Activated CD4-positive, alpha-beta T cell treated with anti-CD3 and anti-CD28 coated beads, Interleukin-2, amount 10 ng/mL, durations not matched to agents 24 days and 14 days (primary cell): ENCODE measurements at regions of chr20 and their contacts with region 1.

Region 1: DNA sequence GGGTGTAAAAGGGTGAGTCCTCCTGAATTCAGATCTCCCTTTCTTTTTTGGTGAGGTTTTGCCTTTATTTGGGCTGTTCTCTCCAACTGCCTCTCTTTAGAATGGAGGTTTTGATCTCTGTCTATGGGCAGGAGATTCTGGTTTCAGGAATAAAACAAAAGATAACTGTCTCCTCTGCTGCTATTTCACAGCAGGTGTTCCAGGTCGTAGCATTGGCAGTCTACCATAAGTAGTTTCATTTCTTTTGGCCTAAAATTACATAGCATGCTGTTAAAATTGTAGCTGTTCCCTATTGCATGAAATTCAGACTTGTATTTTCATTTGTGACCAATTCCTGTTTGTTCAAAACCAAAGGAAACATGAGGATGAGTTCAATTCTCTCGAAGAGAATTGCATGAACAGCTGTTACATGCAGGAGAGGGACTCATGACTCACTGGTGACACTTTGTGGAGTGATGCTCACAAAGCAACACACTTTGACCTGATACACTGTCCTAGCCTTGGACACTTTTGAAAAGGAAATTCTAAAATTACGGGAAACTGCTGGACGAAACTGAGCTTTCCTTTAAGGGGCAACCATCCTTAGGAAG is 76.8 kb upstream of the SIRPG start:
- DNase-seq: peak; percentile 80
- H3K4me3 Mint-ChIP-seq: no peak overlapping the region
- H3K27ac Mint-ChIP-seq: no peak overlapping the region
- H3K4me1 Mint-ChIP-seq: peaks cover 33% of the 10 kb centered on the region
- H3K27me3 Mint-ChIP-seq: peaks cover 2% of the 10 kb centered on the region

Region 2: GRCh38 chr20:1377984-1378734 is 356.2 kb before region 1 on chr20:
- intact Hi-C with region 1: no loop called
- DNase-seq: no peak
- H3K4me3 Mint-ChIP-seq: peak overlapping the region; percentile 53
- H3K27ac Mint-ChIP-seq: peak overlapping the region; percentile 82
- H3K4me1 Mint-ChIP-seq: peaks cover 86% of the 10 kb centered on the region
- H3K27me3 Mint-ChIP-seq: no peaks in the 10 kb centered on the region

Region 3: DNA sequence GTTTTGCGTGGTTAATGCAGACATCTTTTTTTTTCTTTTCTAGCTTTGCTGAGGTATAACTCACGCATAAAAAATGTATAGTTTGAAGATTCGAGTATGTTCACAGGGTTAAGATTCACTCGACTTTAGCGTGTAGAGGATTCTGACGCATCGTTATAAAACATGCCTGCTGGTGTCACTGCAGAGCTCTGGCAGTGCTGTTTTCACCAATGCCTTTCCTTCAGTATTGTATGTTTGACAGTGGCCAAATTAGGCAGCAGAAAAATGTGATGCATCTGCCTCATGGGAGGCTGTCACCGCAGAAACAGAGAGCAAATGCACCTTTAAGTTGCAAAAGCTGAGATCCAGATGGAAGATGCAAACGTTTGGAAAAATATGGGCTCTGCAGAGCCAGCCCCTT is 225.1 kb before region 1 on chr20:
- intact Hi-C with region 1: loop called (anchors 1 kb)
- DNase-seq: peak; percentile 78
- H3K4me3 Mint-ChIP-seq: no peak overlapping the region
- H3K27ac Mint-ChIP-seq: no peak overlapping the region
- H3K4me1 Mint-ChIP-seq: no peaks in the 10 kb centered on the region
- H3K27me3 Mint-ChIP-seq: peaks cover 46% of the 10 kb centered on the region

Region 4: GRCh38 chr20:1533059-1533458 is 201.3 kb before region 1 on chr20:
- intact Hi-C with region 1: loop called (anchors 1 kb)
- DNase-seq: peak; percentile 69
- H3K4me3 Mint-ChIP-seq: no peak overlapping the region
- H3K27ac Mint-ChIP-seq: no peak overlapping the region
- H3K4me1 Mint-ChIP-seq: peaks cover 5% of the 10 kb centered on the region
- H3K27me3 Mint-ChIP-seq: peaks cover 3% of the 10 kb centered on the region

Region 5: GRCh38 chr20:1555952-1556351 is 178.4 kb before region 1 on chr20:
- intact Hi-C with region 1: loop called (anchors 5 kb)
- DNase-seq: no peak
- H3K4me3 Mint-ChIP-seq: no peak overlapping the region
- H3K27ac Mint-ChIP-seq: no peak overlapping the region
- H3K4me1 Mint-ChIP-seq: peaks cover 2% of the 10 kb centered on the region
- H3K27me3 Mint-ChIP-seq: no peaks in the 10 kb centered on the region

Region 6: GRCh38 chr20:1623501-1624265 is 110.7 kb before region 1 on chr20:
- intact Hi-C with region 1: loop called (anchors 1 kb)
- DNase-seq: no peak
- H3K4me3 Mint-ChIP-seq: no peak overlapping the region
- H3K27ac Mint-ChIP-seq: peak overlapping the region; percentile 17
- H3K4me1 Mint-ChIP-seq: peaks cover 81% of the 10 kb centered on the region
- H3K27me3 Mint-ChIP-seq: no peaks in the 10 kb centered on the region

Region 7: DNA sequence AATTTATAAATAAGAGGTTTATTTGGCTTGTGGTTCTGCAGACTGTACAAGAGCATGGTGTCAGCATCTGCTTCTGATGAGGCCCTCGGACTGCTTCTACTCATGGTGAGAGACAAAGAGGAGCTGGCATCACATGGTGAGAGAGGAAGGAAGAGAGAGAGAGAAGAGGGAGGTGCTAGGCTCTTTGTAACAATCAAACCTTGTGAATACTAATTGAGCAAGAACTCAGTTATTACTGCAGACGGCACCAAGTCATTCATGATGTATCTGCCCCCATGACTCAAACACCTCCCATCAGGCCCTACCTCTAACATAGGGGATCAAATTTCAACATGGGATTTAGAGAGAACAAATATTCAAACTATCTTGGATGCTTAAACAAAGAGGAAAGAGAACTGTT is 70.4 kb before region 1 on chr20:
- intact Hi-C with region 1: loop called (anchors 1 kb)
- DNase-seq: peak; percentile 65
- H3K4me3 Mint-ChIP-seq: peak overlapping the region; percentile 85
- H3K27ac Mint-ChIP-seq: peak overlapping the region; percentile 90
- H3K4me1 Mint-ChIP-seq: peaks cover 80% of the 10 kb centered on the region
- H3K27me3 Mint-ChIP-seq: no peaks in the 10 kb centered on the region